Activated CD4-positive, alpha-beta T cell treated with anti-CD3 and anti-CD28 coated beads, Interleukin-2, amount 10 ng/mL, durations not matched to agents 24 days and 14 days (primary cell): ENCODE measurements at regions of chr21 and their contacts with region 1.

Region 1: DNA sequence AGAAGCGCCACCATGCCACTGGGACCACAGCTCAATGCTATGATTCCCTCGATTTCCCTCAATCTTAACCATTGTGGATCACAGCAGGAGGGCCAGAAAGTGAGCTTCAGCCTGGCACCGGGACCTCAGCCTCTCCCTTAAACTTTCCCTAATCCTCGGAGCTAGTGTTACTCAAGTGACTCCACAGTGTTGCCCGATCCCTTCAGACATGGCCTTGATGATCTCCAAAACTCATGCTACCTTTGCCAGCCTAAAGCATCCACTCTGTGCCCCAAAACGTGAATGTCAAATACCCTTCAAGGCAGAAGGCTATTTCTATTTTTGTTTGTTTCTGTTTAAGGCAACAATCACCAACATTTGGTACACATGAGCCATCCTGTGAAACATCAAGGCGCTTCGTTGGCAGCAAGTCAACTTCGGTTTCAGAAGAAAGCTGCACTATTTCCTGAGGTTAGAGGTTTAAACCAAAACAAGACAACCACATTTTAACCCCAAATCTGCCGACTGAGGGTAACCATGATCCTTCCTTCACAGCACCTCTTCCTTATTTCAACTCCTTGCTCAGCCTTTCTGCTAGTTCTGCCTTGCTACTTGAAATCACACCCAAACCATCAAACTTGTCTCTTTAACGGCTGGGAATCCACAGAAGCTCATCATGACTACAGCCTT is 94.4 kb upstream of the KRTAP19-8 start:
- DNase-seq: peak; percentile 94
- H3K4me3 Mint-ChIP-seq: peak overlapping the region; percentile 76
- H3K27ac Mint-ChIP-seq: peak overlapping the region; percentile 98
- H3K4me1 Mint-ChIP-seq: peaks cover 64% of the 10 kb centered on the region
- H3K27me3 Mint-ChIP-seq: no peaks in the 10 kb centered on the region

Region 2: DNA sequence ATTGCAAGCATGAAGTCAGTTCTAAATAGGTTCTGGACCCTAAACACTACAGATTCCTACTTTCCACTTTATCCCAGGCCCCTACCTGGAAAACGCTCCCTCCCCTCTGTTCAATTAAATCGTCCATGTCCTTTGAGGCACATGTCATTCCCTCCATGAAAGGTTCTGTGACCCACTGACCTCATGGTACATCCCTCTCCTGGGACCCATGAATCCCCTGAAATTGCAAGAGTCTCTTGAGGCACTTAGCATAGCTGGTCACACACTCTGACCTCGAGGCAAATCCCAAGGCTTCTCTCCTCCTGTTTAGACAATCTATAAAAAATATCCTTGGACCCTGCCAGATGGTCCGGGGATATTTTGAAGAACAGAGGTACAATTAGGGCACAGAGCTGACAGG is 60.2 kb before region 1 on chr21:
- intact Hi-C with region 1: no loop called
- DNase-seq: no peak
- H3K4me3 Mint-ChIP-seq: no peak overlapping the region
- H3K27ac Mint-ChIP-seq: no peak overlapping the region
- H3K4me1 Mint-ChIP-seq: peaks cover 4% of the 10 kb centered on the region
- H3K27me3 Mint-ChIP-seq: peaks cover 32% of the 10 kb centered on the region

Region 3: DNA sequence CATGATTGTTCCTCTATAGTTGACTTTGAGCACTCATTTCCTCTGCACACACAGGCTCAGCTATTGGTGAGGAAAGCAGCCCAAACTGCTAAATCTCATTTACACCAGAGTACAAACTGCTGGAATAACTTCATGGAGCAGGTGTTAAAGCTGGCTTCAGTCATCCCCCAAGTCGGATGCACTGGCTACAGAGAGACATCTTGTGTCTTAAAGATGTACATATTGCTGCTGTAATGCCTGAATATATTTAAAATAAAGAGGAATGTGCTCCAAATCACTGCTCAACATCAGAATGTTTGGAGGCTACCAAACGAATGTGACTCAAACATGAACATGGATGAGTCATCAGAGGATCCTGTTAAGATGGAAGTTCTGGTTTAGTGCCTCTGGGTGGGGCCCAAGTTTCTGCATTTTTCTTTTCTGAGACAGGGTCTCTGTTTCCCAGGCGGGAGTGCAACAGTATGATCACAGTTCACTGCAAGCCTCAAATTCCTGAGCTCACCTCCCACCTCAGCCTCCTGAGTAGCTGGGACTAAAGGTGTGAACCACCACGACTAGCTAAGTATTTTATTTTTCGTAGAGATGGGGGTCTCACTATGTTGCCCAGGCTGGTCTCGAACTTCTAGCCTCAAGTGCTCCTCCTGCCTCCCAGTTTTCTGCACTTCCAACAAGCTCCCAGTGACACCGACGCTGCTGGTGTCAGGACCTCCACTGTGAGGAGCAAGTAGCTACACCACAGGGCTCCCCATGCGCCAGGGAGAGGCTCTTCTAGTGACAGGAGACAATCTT is 15.4 kb before region 1 on chr21:
- intact Hi-C with region 1: loop called (anchors 1 kb)
- DNase-seq: peak; percentile 64
- H3K4me3 Mint-ChIP-seq: no peak overlapping the region
- H3K27ac Mint-ChIP-seq: peak overlapping the region; percentile 58
- H3K4me1 Mint-ChIP-seq: peaks cover 21% of the 10 kb centered on the region
- H3K27me3 Mint-ChIP-seq: no peaks in the 10 kb centered on the region

Region 4: GRCh38 chr21:31180256-31181081 is 47.8 kb after region 1 on chr21:
- intact Hi-C with region 1: loop called (anchors 1 kb)
- DNase-seq: peak; percentile 77
- H3K4me3 Mint-ChIP-seq: peak overlapping the region; percentile 91
- H3K27ac Mint-ChIP-seq: peak overlapping the region; percentile 96
- H3K4me1 Mint-ChIP-seq: peaks cover 58% of the 10 kb centered on the region
- H3K27me3 Mint-ChIP-seq: no peaks in the 10 kb centered on the region

Region 5: GRCh38 chr21:31354604-31355443 is 222.1 kb after region 1 on chr21:
- intact Hi-C with region 1: loop called (anchors 1 kb)
- DNase-seq: peak; percentile 95
- H3K4me3 Mint-ChIP-seq: peak overlapping the region; percentile 44
- H3K27ac Mint-ChIP-seq: peak overlapping the region; percentile 87
- H3K4me1 Mint-ChIP-seq: peaks cover 40% of the 10 kb centered on the region
- H3K27me3 Mint-ChIP-seq: peaks cover 5% of the 10 kb centered on the region

Region 6: GRCh38 chr21:31731802-31732596 is 599.3 kb after region 1 on chr21 and contains the start of gene SCAF4:
- intact Hi-C with region 1: loop called (anchors 5 kb)
- DNase-seq: peak; percentile 94
- H3K4me3 Mint-ChIP-seq: peak within 1 kb of the TSS; percentile 90
- H3K27ac Mint-ChIP-seq: peak within 1 kb of the TSS; percentile 82
- H3K4me1 Mint-ChIP-seq: peaks cover 9% of the 10 kb centered on the region
- H3K27me3 Mint-ChIP-seq: no peaks in the 10 kb centered on the region
- total RNA-seq, gene SCAF4: 65.4 and 65.7 TPM in 2 replicates